PC-3 (cell line): ENCODE measurements at regions of chr2 and their contacts with region 1.

Region 1: GRCh38 chr2:86079981-86080911 is 25.4 kb downstream of the POLR1A start:
- DNase-seq: peak; percentile 52
- ATAC-seq: peak; percentile 89
- H3K4me3 ChIP-seq: no peak overlapping the region
- H3K27ac ChIP-seq: no peak overlapping the region
- H3K4me1 ChIP-seq: no peaks in the 10 kb centered on the region
- H3K27me3 ChIP-seq: no peaks in the 10 kb centered on the region
- CTCF ChIP-seq: peak; percentile 82

Region 2: GRCh38 chr2:85669549-85669948 is 410.7 kb before region 1 on chr2:
- CTCF ChIA-PET with region 1: no interaction called
- POLR2A ChIA-PET with region 1: no interaction called
- intact Hi-C with region 1: no loop called
- DNase-seq: no peak
- ATAC-seq: no peak
- H3K4me3 ChIP-seq: no peak overlapping the region
- H3K27ac ChIP-seq: no peak overlapping the region
- H3K4me1 ChIP-seq: no peaks in the 10 kb centered on the region
- H3K27me3 ChIP-seq: no peaks in the 10 kb centered on the region
- CTCF ChIP-seq: no peak

Region 3: DNA sequence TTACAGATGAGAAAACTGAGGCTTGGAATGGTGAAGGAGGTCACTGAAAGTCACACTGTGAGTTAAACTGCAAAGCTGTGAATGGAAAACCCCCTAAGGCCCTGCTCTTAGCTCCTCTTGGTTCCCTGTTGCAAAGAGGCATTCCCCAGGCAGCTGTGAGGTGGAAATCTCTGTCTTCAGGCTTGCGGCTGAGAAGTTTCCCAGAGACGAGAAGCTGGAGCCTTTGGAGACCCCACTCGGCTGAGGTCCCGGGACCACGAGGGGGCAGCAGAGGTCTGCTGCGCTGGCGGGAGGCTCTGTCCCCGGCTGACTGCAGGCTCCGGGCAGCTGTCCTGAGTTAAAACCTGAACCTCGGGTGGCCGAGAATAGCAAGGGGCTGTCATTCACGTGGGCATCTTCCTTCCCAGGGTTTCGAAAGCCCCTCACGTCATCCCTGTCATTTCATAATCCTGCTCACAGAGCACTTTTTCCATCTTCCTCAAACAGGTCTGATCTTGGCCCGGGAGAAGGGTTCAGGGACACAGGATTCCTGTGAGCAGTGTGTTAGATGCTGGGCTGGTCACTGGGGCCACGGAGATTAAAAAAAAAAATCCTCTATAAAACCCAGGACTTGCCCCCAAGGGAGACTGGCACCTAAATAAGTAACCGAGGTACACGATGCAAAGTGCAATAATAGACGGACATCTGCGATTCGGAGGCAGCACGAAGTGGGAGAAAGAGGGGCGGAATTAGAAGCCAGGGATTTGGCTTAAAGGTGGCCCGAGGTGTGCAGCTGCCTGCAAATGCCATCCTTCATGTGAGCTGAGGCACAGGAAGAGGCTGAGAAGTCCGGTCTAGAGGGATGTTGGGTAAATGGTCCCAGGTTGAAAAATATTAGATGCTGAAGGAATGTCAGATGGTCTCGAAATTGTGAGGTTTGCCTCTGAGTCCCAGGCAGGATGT is 351.1 kb before region 1 on chr2:
- CTCF ChIA-PET with region 1: no interaction called
- POLR2A ChIA-PET with region 1: no interaction called
- intact Hi-C with region 1: loop called (anchors 5 kb)
- DNase-seq: peak; percentile 83
- ATAC-seq: peak; percentile 100
- H3K4me3 ChIP-seq: no peak overlapping the region
- H3K27ac ChIP-seq: no peak overlapping the region
- H3K4me1 ChIP-seq: no peaks in the 10 kb centered on the region
- H3K27me3 ChIP-seq: peaks cover 5% of the 10 kb centered on the region; the same call in 1 of the 2 replicates
- CTCF ChIP-seq: peak; percentile 95

Region 4: GRCh38 chr2:85826990-85827878 is 253.0 kb before region 1 on chr2:
- CTCF ChIA-PET with region 1: interaction called, 13 read pairs
- POLR2A ChIA-PET with region 1: no interaction called
- intact Hi-C with region 1: loop called (anchors 1 kb)
- DNase-seq: peak; percentile 73
- ATAC-seq: peak; percentile 97
- H3K4me3 ChIP-seq: peak overlapping the region; percentile 59
- H3K27ac ChIP-seq: no peak overlapping the region
- H3K4me1 ChIP-seq: no peaks in the 10 kb centered on the region
- H3K27me3 ChIP-seq: peaks cover 4% of the 10 kb centered on the region; the same call in 1 of the 2 replicates
- CTCF ChIP-seq: peak; percentile 90

Region 5: DNA sequence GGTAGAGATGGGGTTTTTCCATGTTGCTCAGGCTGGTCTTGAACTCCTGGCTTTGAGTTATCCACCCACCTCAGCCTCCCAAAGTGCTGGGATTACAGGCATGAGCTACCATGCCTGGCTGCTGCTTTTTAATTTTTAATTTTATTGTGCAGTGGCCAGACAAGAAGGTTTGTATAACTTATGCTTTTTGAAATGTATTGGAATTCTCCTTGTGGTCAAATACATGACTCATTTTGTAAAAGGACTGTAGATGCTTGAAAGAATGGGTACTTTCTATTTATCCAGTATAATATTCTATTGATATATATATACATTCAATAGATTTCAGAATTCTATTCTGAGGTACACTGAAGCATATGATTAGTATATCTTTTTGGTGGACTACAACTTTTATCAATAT is 108.9 kb before region 1 on chr2:
- CTCF ChIA-PET with region 1: no interaction called
- POLR2A ChIA-PET with region 1: no interaction called
- intact Hi-C with region 1: no loop called
- DNase-seq: peak; percentile 28
- ATAC-seq: no peak
- H3K4me3 ChIP-seq: no peak overlapping the region
- H3K27ac ChIP-seq: no peak overlapping the region
- H3K4me1 ChIP-seq: no peaks in the 10 kb centered on the region
- H3K27me3 ChIP-seq: peaks cover 20% of the 10 kb centered on the region; the same call in 1 of the 2 replicates
- CTCF ChIP-seq: no peak